Activated CD8-positive, alpha-beta T cell treated with anti-CD3 and anti-CD28 coated beads for 36 hours (primary cell): ENCODE measurements at regions of chr10 and their contacts with region 1.

Region 1: DNA sequence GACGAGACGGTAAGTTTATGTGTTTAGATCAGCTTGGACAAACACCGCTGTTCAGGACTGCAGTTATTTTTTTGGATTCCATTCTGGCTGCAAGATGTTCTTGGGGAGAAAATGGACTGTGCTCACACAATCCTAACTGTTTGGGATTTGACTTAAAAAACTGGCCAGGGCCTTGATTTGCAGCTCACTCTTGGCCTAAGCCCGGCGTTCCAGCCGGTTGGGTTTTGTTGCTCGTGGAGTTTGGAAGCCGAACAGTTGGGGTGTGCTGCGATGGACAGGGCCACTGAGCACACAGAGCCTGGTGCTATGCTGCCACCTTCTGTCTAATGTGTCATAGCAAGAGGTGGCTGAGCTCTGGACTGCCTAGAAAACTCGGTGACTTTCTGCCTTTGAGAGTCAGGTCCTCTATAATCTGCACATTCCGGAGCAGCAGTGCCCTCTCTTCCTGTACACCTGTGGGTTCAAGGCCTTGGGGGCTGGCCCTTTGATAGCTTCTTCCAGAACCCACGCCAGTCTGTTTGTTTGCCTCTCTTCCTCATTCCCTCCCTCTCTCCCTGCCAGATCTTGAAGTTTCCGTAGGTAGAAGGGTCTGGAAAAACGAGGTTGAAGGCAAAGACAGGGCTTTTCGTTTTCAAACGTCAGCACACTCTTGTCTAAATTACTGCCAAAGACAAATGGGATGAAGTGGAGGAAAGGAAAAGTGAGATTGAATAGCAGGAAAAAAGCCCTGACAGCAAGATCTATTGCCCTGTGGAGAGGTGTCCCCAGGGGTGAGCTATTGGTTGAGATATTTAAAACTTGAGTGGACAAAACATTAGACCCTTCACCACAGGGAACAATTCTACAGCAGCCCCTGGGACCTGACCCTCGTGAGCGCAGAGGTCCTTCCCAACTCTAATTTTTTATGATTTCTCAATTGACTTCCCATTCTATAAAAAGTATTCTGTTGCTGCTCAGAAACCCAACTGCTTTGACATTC is 167.5 kb upstream of the HABP2 start:
- DNase-seq: peak; percentile 70
- ATAC-seq: peak; percentile 94
- H3K4me3 Mint-ChIP-seq: no peak overlapping the region
- H3K27ac Mint-ChIP-seq: no peak overlapping the region
- H3K4me1 Mint-ChIP-seq: peaks cover 23% of the 10 kb centered on the region
- H3K27me3 Mint-ChIP-seq: peaks cover 3% of the 10 kb centered on the region
- CTCF ChIP-seq: peak; percentile 74

Region 2: DNA sequence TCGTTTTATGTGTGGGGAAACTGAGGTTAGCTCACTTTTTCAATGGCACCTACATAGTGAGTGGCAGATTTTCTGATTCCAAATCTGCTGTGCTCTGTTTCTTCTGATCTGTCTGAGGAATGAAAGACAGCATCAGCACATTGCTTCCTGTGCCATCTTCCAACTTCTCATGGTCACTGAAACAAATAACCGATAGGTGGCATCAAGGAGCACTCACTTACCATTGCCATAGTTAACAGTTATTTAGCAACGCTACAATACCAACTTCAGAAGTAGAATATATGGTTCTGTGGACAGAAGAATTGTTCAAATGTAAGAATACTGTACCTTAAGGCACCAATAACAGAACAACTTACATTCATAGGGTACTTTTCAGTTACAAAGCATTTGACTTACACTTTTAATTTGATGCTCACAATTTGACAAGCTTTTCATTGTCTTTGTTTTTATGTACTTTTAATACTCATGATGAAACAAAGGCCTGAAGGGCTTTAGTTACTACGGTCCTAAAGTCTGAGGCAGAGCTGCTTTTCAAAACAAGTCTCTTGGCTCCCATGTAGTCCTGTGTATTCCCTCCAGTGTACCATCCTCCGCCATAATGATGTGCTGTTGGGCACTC is 664.1 kb before region 1 on chr10:
- CTCF ChIA-PET with region 1: interaction called, 14 read pairs
- POLR2A ChIA-PET with region 1: no interaction called
- intact Hi-C with region 1: no loop called
- DNase-seq: peak; percentile 12
- ATAC-seq: peak; percentile 53
- H3K4me3 Mint-ChIP-seq: no peak overlapping the region
- H3K27ac Mint-ChIP-seq: no peak overlapping the region
- H3K4me1 Mint-ChIP-seq: no peaks in the 10 kb centered on the region
- H3K27me3 Mint-ChIP-seq: no peaks in the 10 kb centered on the region
- CTCF ChIP-seq: peak; percentile 61

Region 3: GRCh38 chr10:113221756-113222168 is 163.5 kb before region 1 on chr10:
- CTCF ChIA-PET with region 1: interaction called, 4 read pairs
- POLR2A ChIA-PET with region 1: no interaction called
- intact Hi-C with region 1: loop called (anchors 10 kb)
- DNase-seq: no peak
- ATAC-seq: no peak
- H3K4me3 Mint-ChIP-seq: no peak overlapping the region
- H3K27ac Mint-ChIP-seq: no peak overlapping the region
- H3K4me1 Mint-ChIP-seq: peaks cover 18% of the 10 kb centered on the region
- H3K27me3 Mint-ChIP-seq: peaks cover 23% of the 10 kb centered on the region
- CTCF ChIP-seq: no peak